Endothelial cell of umbilical vein (primary cell): ENCODE measurements at regions of chr9 and their contacts with region 1.

Region 1: GRCh38 chr9:87336914-87337333 is 160.7 kb upstream of the DAPK1 start:
- DNase-seq: peak; percentile 77
- H3K4me3 ChIP-seq: peak overlapping the region in 2 of 3 experiments; percentile 25 to 48
- H3K27ac ChIP-seq: no peak overlapping the region
- H3K4me1 ChIP-seq: peaks cover 6% of the 10 kb centered on the region
- H3K27me3 ChIP-seq: peaks cover 12 to 16% of the 10 kb centered on the region in 2 experiments
- CTCF ChIP-seq: peak; percentile 41 to 53
- POLR2A ChIP-seq: no peak

Region 2: DNA sequence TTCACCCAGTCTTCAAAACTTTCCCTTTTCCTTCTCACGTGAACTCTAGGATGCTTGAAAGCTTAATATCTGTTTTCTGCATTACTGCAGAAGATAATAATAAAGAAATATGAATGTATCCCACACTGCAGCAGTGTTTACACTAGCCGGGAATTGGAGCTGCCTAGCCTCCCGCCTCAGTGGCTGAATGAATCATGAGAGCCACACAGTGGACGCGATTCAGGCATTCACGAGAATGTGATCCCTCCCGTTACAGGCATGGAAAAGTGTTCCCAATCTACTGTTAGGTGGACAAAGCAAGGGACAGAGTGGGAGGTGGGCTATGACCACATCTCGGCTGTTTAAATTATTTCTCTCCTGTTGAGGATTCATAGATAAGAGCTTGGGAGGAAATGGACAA is 319.6 kb after region 1 on chr9:
- CTCF ChIA-PET with region 1: interaction called, 101 read pairs
- POLR2A ChIA-PET with region 1: no interaction called
- dilution Hi-C with region 1: loop called (anchors 10 kb)
- intact Hi-C with region 1: no loop called
- DNase-seq: peak; percentile 67
- H3K4me3 ChIP-seq: no peak overlapping the region
- H3K27ac ChIP-seq: peak overlapping the region; percentile 44
- H3K4me1 ChIP-seq: peaks cover 12% of the 10 kb centered on the region
- H3K27me3 ChIP-seq: no peaks in the 10 kb centered on the region
- CTCF ChIP-seq: no peak
- POLR2A ChIP-seq: no peak

Region 3: DNA sequence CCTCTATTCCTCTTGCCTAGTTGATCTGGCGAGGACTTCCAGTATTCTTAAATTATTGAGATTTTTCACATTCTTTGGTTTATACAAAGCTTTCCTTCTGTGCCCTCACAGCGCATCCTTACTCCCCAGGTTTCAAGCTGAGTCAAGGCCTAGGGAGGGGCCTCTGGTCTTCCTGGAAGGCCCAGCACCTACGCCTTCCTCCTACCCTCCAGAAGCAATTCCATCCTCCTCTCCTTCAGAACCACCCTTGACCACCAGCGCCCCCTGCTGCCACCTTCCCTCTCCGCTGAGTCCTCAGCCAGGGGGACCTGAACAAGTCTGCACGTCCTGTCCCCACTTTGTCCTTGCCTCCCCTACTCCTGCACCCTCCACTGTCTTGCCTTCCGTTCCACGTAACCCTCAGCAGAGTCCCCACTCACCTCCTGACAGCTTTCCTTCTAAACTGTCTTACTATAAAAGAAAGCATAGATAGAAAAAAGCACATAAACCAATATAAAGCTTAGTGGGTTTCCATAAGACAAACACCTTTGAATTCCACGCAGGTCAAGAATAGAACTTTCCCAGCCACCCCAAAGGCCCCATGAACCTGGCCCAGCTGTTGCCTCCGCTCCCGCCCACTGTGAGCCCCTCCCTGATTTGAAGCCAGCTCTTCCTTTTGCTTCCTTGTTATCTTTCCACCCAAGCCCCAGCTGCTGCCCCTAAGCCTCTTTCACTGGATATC is 326.0 kb after region 1 on chr9:
- CTCF ChIA-PET with region 1: interaction called, 101 read pairs
- POLR2A ChIA-PET with region 1: no interaction called
- dilution Hi-C with region 1: loop called (anchors 10 kb)
- intact Hi-C with region 1: loop called (anchors 1 kb)
- DNase-seq: peak; percentile 74
- H3K4me3 ChIP-seq: no peak overlapping the region
- H3K27ac ChIP-seq: no peak overlapping the region
- H3K4me1 ChIP-seq: no peaks in the 10 kb centered on the region
- H3K27me3 ChIP-seq: no peaks in the 10 kb centered on the region
- CTCF ChIP-seq: peak; percentile 80 to 87
- POLR2A ChIP-seq: no peak

Region 4: GRCh38 chr9:87678650-87679515 is 342.0 kb after region 1 on chr9:
- CTCF ChIA-PET with region 1: interaction called, 15 read pairs
- POLR2A ChIA-PET with region 1: no interaction called
- dilution Hi-C with region 1: no loop called
- intact Hi-C with region 1: no loop called
- DNase-seq: peak; percentile 57
- H3K4me3 ChIP-seq: no peak overlapping the region
- H3K27ac ChIP-seq: no peak overlapping the region
- H3K4me1 ChIP-seq: no peaks in the 10 kb centered on the region
- H3K27me3 ChIP-seq: no peaks in the 10 kb centered on the region
- CTCF ChIP-seq: peak; percentile 69 to 76
- POLR2A ChIP-seq: no peak

Region 5: GRCh38 chr9:87684627-87685219 is 347.8 kb after region 1 on chr9:
- CTCF ChIA-PET with region 1: interaction called, 14 read pairs
- POLR2A ChIA-PET with region 1: no interaction called
- dilution Hi-C with region 1: no loop called
- intact Hi-C with region 1: no loop called
- DNase-seq: peak; percentile 30
- H3K4me3 ChIP-seq: no peak overlapping the region
- H3K27ac ChIP-seq: no peak overlapping the region
- H3K4me1 ChIP-seq: peaks cover 17% of the 10 kb centered on the region
- H3K27me3 ChIP-seq: no peaks in the 10 kb centered on the region
- CTCF ChIP-seq: peak; percentile 60 to 77
- POLR2A ChIP-seq: no peak

Region 6: GRCh38 chr9:87725900-87726709 is 389.2 kb after region 1 on chr9 and contains the start of gene CTSL:
- CTCF ChIA-PET with region 1: interaction called, 3 read pairs
- POLR2A ChIA-PET with region 1: no interaction called
- dilution Hi-C with region 1: no loop called
- intact Hi-C with region 1: loop called (anchors 1 kb)
- DNase-seq: peak; percentile 80
- H3K4me3 ChIP-seq: peak within 1 kb of the TSS; percentile 24 to 79 (median 57)
- H3K27ac ChIP-seq: peak within 1 kb of the TSS; percentile 57
- H3K4me1 ChIP-seq: no peaks in the 10 kb centered on the region
- H3K27me3 ChIP-seq: no peaks in the 10 kb centered on the region
- CTCF ChIP-seq: peak in 1 of 2 donors; percentile 35
- POLR2A ChIP-seq: peak; percentile 92
- total RNA-seq, gene CTSL: 105 and 107 TPM in 2 replicates

Region 7: DNA sequence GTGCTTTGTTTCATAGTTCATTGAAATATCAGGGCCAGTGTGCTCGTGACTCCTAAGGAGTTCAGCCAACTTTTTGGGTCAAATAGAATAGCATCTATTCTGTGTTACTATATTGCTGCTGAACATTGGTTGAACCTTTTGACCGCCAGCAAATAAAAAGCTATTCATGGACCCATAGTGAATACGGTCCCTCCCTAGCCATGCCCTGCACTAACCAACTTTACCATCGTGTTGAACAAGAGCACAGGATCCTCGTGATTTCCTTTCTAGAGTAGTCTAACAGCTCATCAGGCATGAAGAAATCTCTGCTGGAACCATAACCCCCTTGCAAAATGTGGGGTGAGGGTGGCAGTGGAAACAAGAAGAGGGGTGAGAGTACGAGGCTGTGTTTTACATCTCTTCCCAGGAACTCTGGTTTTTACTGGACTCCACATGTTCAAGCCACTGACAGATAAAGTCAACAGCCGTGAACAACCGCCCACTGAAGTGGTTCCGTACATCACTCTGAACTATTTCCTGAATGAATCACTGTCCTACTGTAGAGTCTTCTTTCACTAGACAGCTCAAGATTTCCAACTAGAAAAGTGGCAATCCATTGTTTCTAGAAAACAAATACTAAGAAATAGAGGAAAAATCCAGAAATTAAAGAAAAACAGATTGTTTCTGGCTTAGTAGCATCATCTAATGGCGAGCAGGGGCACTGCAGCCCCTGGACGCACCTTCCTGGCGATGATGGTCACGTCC is 475.6 kb after region 1 on chr9:
- CTCF ChIA-PET with region 1: interaction called, 28 read pairs
- POLR2A ChIA-PET with region 1: no interaction called
- dilution Hi-C with region 1: no loop called
- intact Hi-C with region 1: loop called (anchors 1 kb)
- DNase-seq: peak; percentile 49
- H3K4me3 ChIP-seq: no peak overlapping the region
- H3K27ac ChIP-seq: no peak overlapping the region
- H3K4me1 ChIP-seq: no peaks in the 10 kb centered on the region
- H3K27me3 ChIP-seq: peaks cover 0 to 5% of the 10 kb centered on the region in 2 experiments
- CTCF ChIP-seq: peak; percentile 89 to 99
- POLR2A ChIP-seq: no peak